ENCODE measurements at regions of chr6 and their contacts with region 1.

Region 1: GRCh38 chr6:44004625-44005506 is 122.4 kb downstream of the MRPL14 start:
- DNase-seq: no peak

Region 2: DNA sequence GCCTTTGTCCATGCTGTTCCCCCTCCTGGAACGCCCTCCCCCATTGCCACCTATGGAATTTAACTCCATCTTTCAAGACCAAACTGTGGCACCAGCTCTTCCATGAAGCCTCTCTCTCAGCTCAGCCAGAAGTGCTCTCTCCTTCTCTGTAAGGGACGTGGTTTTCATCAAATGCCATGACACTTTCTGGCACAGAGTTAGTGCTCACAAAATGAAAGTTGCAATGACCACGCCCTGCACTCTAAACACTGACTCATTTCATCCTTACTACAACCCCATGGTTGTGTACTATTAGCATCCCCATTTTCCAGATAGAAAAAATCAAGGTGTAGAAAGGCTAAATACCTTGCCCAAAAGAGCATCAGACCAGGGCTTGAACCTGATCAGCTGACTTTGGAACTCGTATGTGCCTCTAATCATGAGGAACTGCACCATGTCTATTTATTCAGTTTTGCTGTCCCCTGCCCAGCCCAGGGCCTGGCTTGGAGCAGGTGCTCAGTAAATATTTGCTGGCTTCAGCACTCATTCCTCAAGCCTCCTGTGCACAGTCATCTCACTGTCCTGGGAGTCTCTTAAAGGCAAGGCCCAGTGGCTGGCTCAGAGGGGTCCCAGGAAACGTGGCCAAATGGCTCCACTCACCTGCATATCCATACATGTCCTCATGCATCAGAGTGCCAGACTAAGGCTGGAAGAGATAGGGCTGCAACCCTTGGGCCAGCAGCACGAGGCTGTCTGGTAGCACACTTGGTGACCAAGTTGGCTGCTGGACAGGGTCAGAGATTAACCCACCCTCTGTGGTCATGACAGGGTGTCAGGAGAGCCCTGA is 44.5 kb after region 1 on chr6:
- intact Hi-C with region 1: loop called (anchors 5 kb)
- DNase-seq: peak; percentile 66

Region 3: GRCh38 chr6:44064089-44064947 is 59.5 kb after region 1 on chr6:
- intact Hi-C with region 1: loop called (anchors 5 kb)
- DNase-seq: peak; percentile 88

Measured in cardiac septum (tissue), 1 donor.